ENCODE measurements at regions of chr10 and their contacts with region 1.

Region 1: GRCh38 chr10:4656576-4657182 is 169.3 kb upstream of the AKR1E2 start:
- DNase-seq: peak; percentile 65
- ATAC-seq: no peak
- H3K4me3 Mint-ChIP-seq: no peak overlapping the region
- H3K27ac Mint-ChIP-seq: no peak overlapping the region
- H3K4me1 Mint-ChIP-seq: peaks cover 21% of the 10 kb centered on the region
- H3K27me3 Mint-ChIP-seq: peaks cover 9% of the 10 kb centered on the region

Region 2: DNA sequence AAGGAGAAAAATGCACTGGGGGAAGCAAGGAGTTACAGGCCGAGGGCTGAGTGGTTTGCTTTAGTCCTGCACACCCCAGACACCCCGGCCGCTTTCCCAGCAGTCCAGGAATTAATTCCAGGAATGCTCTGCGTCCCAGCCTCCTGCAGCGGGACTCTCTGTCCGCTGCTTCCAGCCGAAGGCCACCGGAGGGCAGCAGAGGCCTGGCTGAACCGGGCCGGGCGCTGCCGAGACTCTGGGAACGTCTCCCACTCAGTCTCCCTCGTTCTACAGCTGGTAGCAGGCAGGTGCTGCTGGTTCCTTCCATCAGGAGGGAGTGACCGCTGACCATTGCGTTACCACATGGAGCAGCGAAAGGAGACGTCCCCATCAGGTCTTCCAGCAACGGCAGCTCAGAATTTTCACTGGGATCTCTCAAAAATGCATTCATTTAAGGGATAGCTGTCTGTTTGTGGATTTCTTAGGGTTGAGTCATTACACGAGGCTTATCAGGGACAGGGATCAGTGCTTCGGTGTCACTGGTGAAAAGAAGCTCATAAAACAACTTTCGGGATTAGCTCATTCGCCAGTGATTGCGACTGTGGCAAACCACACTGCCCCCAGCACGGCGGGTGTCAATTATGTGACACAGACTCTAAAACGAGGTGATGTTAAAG is 1459.2 kb before region 1 on chr10:
- CTCF ChIA-PET with region 1: no interaction called
- POLR2A ChIA-PET with region 1: no interaction called
- intact Hi-C with region 1: loop called (anchors 1 kb)
- DNase-seq: peak; percentile 92
- ATAC-seq: peak; percentile 90
- H3K4me3 Mint-ChIP-seq: no peak overlapping the region
- H3K27ac Mint-ChIP-seq: no peak overlapping the region
- H3K4me1 Mint-ChIP-seq: peaks cover 11% of the 10 kb centered on the region
- H3K27me3 Mint-ChIP-seq: peaks cover 60% of the 10 kb centered on the region

Region 3: DNA sequence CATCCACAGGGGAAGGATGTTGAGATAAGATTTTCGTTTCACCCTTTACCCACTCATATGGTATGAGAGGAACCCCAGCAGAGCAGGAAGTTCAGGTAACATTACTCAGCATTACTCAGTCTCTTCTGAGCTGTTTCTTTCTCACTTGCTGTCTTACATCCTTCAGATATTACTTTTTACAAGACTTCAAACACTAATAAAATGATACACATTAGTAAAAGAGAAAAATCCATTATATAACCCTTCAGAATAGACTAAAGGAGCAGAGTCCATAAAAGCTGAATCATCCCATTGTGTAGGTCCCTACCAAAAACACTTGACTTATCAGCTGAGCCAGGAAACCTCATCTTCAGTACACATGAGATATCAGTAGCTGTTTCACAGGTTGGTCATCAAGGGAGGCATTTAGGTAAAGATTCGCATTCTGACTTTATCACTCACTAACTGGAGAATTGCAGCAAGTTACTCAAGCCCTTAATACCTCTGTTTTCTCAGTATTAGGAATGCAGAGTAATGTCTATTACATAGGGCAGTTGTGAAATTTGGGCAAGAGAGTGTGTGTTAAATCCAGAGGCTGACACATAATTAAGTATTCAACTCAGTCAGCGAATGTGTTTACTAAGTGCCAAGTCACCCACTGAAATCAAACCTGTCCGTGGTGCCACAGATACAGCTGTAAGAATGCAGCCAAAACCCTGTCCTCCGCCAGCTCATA is 916.4 kb before region 1 on chr10:
- CTCF ChIA-PET with region 1: no interaction called
- POLR2A ChIA-PET with region 1: no interaction called
- intact Hi-C with region 1: loop called in 1 of 2 experiments (anchors 1 kb)
- DNase-seq: peak; percentile 38
- ATAC-seq: peak; percentile 85
- H3K4me3 Mint-ChIP-seq: no peak overlapping the region
- H3K27ac Mint-ChIP-seq: peak overlapping the region; percentile 60
- H3K4me1 Mint-ChIP-seq: peaks cover 33% of the 10 kb centered on the region
- H3K27me3 Mint-ChIP-seq: no peaks in the 10 kb centered on the region

Region 4: GRCh38 chr10:3852147-3852904 is 804.4 kb before region 1 on chr10:
- CTCF ChIA-PET with region 1: no interaction called
- POLR2A ChIA-PET with region 1: no interaction called
- intact Hi-C with region 1: loop called in 1 of 2 experiments (anchors 10 kb)
- DNase-seq: peak; percentile 83
- ATAC-seq: peak; percentile 93
- H3K4me3 Mint-ChIP-seq: peak overlapping the region; percentile 34
- H3K27ac Mint-ChIP-seq: peak overlapping the region; percentile 94
- H3K4me1 Mint-ChIP-seq: peaks cover 48% of the 10 kb centered on the region
- H3K27me3 Mint-ChIP-seq: no peaks in the 10 kb centered on the region

Region 5: GRCh38 chr10:4131407-4132228 is 525.1 kb before region 1 on chr10:
- CTCF ChIA-PET with region 1: no interaction called
- POLR2A ChIA-PET with region 1: no interaction called
- intact Hi-C with region 1: loop called (anchors 5 kb)
- DNase-seq: peak; percentile 44
- ATAC-seq: peak; percentile 85
- H3K4me3 Mint-ChIP-seq: no peak overlapping the region
- H3K27ac Mint-ChIP-seq: no peak overlapping the region
- H3K4me1 Mint-ChIP-seq: peaks cover 41% of the 10 kb centered on the region
- H3K27me3 Mint-ChIP-seq: peaks cover 11% of the 10 kb centered on the region

Region 6: GRCh38 chr10:4512671-4513240 is 143.9 kb before region 1 on chr10:
- CTCF ChIA-PET with region 1: no interaction called
- POLR2A ChIA-PET with region 1: no interaction called
- intact Hi-C with region 1: loop called in 1 of 2 experiments (anchors 2 kb)
- DNase-seq: peak; percentile 40
- ATAC-seq: no peak
- H3K4me3 Mint-ChIP-seq: no peak overlapping the region
- H3K27ac Mint-ChIP-seq: no peak overlapping the region
- H3K4me1 Mint-ChIP-seq: peaks cover 7% of the 10 kb centered on the region
- H3K27me3 Mint-ChIP-seq: peaks cover 12% of the 10 kb centered on the region

Measured in activated CD4-positive, alpha-beta T cell treated with anti-CD3 and anti-CD28 coated beads for 36 hours (primary cell).